ENCODE measurements at regions of chr22 and their contacts with region 1.

Region 1: DNA sequence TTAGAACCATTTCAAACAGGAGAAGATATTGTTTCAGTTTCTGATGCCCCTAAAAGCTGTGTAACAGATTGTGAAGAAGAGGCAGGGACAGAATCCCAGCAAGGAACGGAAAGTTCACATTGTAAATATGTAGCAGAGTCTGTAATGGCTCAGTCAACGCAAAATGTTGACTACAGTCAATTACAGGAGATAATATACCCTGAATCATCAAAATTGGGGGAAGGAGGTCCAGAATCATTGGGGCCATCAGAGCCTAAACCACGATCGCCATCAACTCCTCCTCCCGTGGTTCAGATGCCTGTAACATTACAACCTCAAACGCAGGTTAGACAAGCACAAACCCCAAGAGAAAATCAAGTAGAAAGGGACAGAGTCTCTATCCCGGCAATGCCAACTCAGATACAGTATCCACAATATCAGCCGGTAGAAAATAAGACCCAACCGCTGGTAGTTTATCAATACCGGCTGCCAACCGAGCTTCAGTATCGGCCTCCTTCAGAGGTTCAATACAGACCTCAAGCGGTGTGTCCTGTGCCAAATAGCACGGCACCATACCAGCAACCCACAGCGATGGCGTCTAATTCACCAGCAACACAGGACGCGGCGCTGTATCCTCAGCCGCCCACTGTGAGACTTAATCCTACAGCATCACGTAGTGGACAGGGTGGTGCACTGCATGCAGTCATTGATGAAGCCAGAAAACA is 40.8 kb downstream of the IGLL1 start:
- ATAC-seq: peak; percentile 88 to 99 (median 93)
- H3K4me3 ChIP-seq: no peak overlapping the region
- H3K27ac ChIP-seq: no peak overlapping the region
- H3K4me1 ChIP-seq: peaks cover 36 to 61% of the 10 kb centered on the region in 2 donors

Region 2: GRCh38 chr22:23315341-23315917 is 223.9 kb before region 1 on chr22:
- in situ Hi-C with region 1: loop called in 1 of 9 experiments (anchors 25 kb)
- ATAC-seq: peak; percentile 25 to 48 (median 34)
- H3K4me3 ChIP-seq: no peak overlapping the region
- H3K27ac ChIP-seq: peak overlapping the region in 1 of 2 donors; percentile 63
- H3K4me1 ChIP-seq: peaks cover 2 to 4% of the 10 kb centered on the region in 2 donors